Common myeloid progenitor, CD34-positive (primary cell): ENCODE measurements at regions of chr17 and their contacts with region 1.

Region 1: GRCh38 chr17:5438716-5439445 is at the start of gene C1QBP:
- DNase-seq: peak; percentile 94 to 97 (median 96)
- H3K4me3 ChIP-seq: peak within 1 kb of the TSS; percentile 68 to 100 (median 92)
- H3K27ac ChIP-seq: peak within 1 kb of the TSS; percentile 75 to 85
- H3K4me1 ChIP-seq: peaks cover 17 to 35% (median 25%) of the 10 kb centered on the region in 4 experiments
- H3K27me3 ChIP-seq: no peaks in the 10 kb centered on the region

Region 2: DNA sequence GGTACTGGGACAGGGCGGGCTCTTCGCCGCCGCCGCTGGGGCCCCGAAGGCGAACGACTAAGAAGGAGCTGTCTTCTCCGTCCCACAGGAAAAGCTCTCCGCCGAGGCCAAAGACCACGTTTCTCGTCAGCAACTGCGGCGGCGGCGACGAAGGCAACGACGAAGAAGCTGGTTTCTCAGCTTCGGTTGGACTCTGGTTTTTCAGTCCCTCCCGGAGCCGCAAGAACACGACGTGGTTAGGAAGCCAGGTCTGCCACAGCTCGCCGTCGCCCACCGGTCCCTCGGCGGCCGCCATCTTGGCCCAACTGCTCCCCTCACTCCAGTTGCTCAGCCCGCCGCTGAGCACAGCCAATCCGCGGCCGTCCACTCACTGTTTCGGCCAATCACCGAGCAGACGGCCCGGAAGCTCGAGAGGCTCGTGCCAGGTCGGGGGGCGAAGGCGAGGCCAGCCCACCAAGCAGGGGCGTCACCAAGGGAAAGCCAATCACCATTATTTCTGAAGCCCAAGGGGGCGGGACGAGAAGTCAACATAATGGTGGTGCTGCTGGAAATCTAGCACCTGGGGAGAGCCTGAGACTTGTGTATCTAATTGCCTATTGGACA is 19.4 kb before region 1 on chr17 and contains the start of gene NUP88:
- CTCF ChIA-PET with region 1: interaction called, 30 read pairs
- POLR2A ChIA-PET with region 1: interaction called, 13 read pairs
- DNase-seq: peak; percentile 97 to 99 (median 99)
- H3K4me3 ChIP-seq: peak within 1 kb of the TSS; percentile 66 to 100 (median 98)
- H3K27ac ChIP-seq: peak within 1 kb of the TSS; percentile 89 to 96
- H3K4me1 ChIP-seq: peaks cover 12 to 34% (median 20%) of the 10 kb centered on the region in 4 experiments
- H3K27me3 ChIP-seq: no peaks in the 10 kb centered on the region